ENCODE measurements at regions of chr6 and their contacts with region 1.

Region 1: GRCh38 chr6:83514866-83515466 is 2.6 kb downstream of the PRSS35 start:
- DNase-seq: peak in 1 of 4 donors; percentile 70
- ATAC-seq: peak; percentile 43
- H3K4me3 ChIP-seq: no peak overlapping the region
- H3K27ac ChIP-seq: no peak overlapping the region
- H3K4me1 ChIP-seq: peaks cover 4 to 11% of the 10 kb centered on the region in 2 donors
- H3K27me3 ChIP-seq: peaks cover 0 to 33% of the 10 kb centered on the region in 2 donors
- CTCF ChIP-seq: peak; percentile 54 to 80

Region 2: DNA sequence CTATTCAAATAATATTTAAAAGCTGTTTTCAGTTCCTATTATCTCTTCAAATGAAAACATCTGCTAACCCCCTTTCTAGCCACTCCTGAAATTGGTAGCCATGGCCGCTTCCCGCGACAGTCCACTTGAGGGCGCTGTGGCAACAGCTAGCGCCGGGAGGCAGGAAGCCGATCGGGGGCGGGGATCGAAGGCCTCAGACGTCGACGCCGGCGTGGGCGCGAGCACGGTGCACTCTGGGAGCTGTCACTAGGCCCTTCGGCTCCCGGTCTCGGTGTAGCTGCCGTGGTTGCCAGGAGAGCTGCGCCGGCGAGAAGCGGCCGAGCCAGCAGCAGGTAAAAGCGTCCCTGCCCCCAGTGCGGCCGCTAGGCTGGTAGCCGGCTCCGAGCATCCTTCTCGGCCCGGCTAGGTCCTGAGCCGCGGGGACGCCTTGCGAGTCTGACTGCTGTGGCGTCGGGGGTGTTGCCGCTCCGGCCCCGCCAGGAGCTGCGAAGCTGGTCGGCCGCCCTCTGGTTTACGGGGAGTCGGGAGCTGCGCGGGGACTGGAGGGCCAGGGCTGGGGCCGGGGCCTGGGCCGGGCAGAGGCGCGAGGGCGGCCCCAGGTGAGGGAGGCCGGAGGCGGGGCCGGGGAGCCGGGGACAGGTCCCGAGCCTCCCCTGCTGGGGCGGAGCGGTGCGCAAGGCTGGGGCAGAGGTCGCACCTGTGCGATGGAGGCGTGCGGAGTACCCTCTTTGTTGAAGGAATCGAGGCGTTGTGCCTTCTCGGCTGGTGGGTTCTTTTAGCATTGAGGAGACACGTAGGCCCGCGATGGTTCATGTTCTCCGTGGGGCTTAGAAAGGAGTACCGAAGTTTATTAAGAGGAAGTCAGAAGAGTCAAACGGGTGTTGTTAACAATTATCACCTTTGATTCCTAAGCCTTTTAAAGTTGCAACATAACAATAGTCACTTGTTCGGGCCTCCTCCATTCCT is 447.2 kb before region 1 on chr6 and contains the start of gene DOP1A:
- intact Hi-C with region 1: loop called in 1 of 2 experiments (anchors 10 kb)
- DNase-seq: peak; percentile 91 to 99 (median 96)
- ATAC-seq: peak; percentile 94
- H3K4me3 ChIP-seq: peak within 1 kb of the TSS; percentile 91 to 97
- H3K27ac ChIP-seq: peak within 1 kb of the TSS; percentile 90
- H3K4me1 ChIP-seq: peaks cover 13 to 54% of the 10 kb centered on the region in 2 donors
- H3K27me3 ChIP-seq: no peaks in the 10 kb centered on the region
- CTCF ChIP-seq: peak; percentile 94 to 95
- polyA plus RNA-seq, gene DOP1A: 32.2 to 42.1 (median 34.9) TPM

Region 3: GRCh38 chr6:83221889-83222479 is 293.0 kb before region 1 on chr6:
- intact Hi-C with region 1: loop called in 1 of 2 experiments (anchors 5 kb)
- DNase-seq: peak in 1 of 4 donors; percentile 40
- ATAC-seq: peak; percentile 41
- H3K4me3 ChIP-seq: no peak overlapping the region
- H3K27ac ChIP-seq: no peak overlapping the region
- H3K4me1 ChIP-seq: no peaks in the 10 kb centered on the region
- H3K27me3 ChIP-seq: no peaks in the 10 kb centered on the region
- CTCF ChIP-seq: peak in 1 of 2 donors; percentile 49

Region 4: DNA sequence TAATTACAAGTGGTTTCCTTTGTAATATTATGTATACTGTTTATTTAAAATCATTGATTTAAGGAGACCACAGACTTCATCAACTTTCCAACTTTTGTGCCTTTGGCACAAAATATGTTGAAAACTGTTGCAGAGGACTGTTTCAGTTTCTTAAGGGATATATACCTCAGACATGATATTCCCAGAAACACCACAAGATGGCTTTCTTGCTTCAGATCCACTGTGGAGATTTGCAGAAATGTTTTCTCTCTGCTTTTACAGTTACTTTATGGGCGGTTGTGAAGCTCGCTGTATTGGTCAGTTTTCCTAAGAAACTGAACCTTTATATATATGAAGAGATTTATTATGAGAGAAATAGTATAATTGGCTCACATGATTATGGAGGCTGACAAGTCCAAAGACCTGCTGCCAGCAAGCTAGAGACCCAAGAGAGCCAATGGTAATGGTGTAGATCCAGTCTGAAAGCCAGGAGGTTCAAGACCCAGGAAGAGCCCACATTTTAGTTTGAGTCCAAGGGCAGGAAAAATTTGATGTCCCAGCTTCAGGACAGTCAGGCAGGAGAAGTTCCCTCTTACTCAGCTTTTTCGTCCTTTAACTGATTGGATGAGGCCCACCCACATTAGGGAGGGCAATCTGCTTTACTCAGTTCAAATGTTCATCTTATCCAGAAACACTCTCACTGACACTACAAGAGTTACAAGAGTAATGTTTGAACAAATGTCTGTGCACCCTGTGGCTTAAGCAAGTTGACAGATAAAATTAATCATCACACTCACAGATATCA is 96.9 kb before region 1 on chr6:
- intact Hi-C with region 1: loop called in 1 of 2 experiments (anchors 5 kb)
- DNase-seq: peak in 2 of 4 donors; percentile 42 to 69
- ATAC-seq: peak; percentile 93
- H3K4me3 ChIP-seq: no peak overlapping the region
- H3K27ac ChIP-seq: no peak overlapping the region
- H3K4me1 ChIP-seq: no peaks in the 10 kb centered on the region
- H3K27me3 ChIP-seq: no peaks in the 10 kb centered on the region
- CTCF ChIP-seq: peak; percentile 49 to 60

Measured in left lung (tissue), 14 donors.